Activated T-helper 1 cell treated with anti-CD3 and anti-CD28 coated beads, Interleukin-12 subunit alpha, Interleukin-12 subunit beta, Interleukin-2, Interleukin-4 antibody, amounts not matched to agents 30 ng/mL and 10 ng/mL and 1 ng/mL, durations not matched to agents 14 hours and 24 hours and 36 hours (primary cell): ENCODE measurements at regions of chr2 and their contacts with region 1.

Region 1: GRCh38 chr2:135863233-135863632 is 13.0 kb downstream of the MCM6 start:
- DNase-seq: no peak
- H3K4me3 Mint-ChIP-seq: no peak overlapping the region
- H3K27ac Mint-ChIP-seq: no peak overlapping the region
- H3K4me1 Mint-ChIP-seq: peaks cover 44% of the 10 kb centered on the region
- H3K27me3 Mint-ChIP-seq: no peaks in the 10 kb centered on the region

Region 2: DNA sequence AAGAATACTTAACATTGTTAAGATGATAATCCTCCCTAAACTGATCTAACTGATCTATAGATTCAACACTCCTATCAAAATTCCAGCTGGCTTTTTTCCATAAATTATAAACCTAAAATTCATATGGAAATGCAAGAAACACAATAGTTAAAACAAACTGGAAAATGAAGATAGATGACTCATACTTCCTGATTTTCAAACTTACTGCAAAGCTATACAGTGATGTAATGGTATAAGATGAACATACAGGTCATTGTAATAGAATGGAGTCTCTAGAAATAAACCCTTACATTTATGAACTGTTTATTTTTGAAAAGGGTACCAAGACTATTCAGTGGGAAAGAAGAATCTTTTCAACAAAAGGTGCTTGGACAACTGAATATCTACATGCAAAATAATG is 89.3 kb before region 1 on chr2:
- intact Hi-C with region 1: loop called (anchors 5 kb)
- DNase-seq: no peak
- H3K4me3 Mint-ChIP-seq: no peak overlapping the region
- H3K27ac Mint-ChIP-seq: no peak overlapping the region
- H3K4me1 Mint-ChIP-seq: peaks cover 9% of the 10 kb centered on the region
- H3K27me3 Mint-ChIP-seq: no peaks in the 10 kb centered on the region

Region 3: GRCh38 chr2:135985018-135985825 is 122.0 kb after region 1 on chr2 and contains the start of gene DARS1:
- intact Hi-C with region 1: no loop called
- DNase-seq: peak; percentile 78
- H3K4me3 Mint-ChIP-seq: peak within 1 kb of the TSS; percentile 91
- H3K27ac Mint-ChIP-seq: peak within 1 kb of the TSS; percentile 97
- H3K4me1 Mint-ChIP-seq: peaks cover 62% of the 10 kb centered on the region
- H3K27me3 Mint-ChIP-seq: no peaks in the 10 kb centered on the region
- total RNA-seq, gene DARS1: 132 and 140 TPM in 2 replicates